Psoas muscle (tissue), 8 donors: ENCODE measurements at regions of chr13 and their contacts with region 1.

Region 1: DNA sequence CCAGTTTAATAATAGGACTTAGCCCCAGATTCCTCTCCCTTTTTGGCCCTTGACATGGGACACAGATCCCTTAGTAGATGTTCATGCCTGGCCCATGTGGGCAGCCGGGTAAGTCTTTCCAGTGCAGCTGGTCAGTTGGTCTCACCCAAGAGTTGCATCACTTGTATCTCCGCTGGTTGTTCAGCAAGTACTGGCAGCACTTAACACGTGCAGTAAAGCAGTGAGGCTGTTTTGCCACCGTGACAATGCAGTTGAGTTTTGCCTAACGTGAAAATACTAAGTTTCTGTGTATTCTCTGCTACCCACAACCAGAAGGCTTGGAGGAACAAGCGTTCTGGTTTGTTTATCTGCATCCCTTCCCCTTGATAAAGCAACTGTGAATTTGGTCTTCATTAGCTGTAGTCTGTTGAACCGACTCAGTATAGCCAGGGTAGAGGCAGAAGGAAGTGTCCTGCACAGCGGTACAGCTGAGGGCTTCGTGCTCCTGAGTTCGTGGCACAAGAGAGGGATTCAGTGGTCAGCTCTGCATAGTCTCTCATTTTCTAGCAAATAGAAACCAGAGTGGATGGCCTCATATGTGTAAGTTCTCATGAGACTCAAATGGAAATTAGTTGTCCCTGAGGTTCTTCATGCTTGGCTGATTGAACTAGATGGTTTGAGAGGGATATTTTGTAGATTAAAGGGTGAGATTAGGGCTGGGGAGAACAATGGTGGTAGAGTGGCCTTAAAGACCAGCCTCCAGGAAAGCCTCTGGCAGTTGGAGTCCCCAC is 50.3 kb downstream of the ARHGEF7 start:
- DNase-seq: peak; percentile 66 to 89
- ATAC-seq: peak; percentile 95 to 98 (median 96)
- H3K4me3 ChIP-seq: no peak overlapping the region
- H3K27ac ChIP-seq: peak overlapping the region; percentile 86
- H3K4me1 ChIP-seq: peaks cover 68% of the 10 kb centered on the region
- H3K27me3 ChIP-seq: no peaks in the 10 kb centered on the region
- CTCF ChIP-seq: no peak

Region 2: DNA sequence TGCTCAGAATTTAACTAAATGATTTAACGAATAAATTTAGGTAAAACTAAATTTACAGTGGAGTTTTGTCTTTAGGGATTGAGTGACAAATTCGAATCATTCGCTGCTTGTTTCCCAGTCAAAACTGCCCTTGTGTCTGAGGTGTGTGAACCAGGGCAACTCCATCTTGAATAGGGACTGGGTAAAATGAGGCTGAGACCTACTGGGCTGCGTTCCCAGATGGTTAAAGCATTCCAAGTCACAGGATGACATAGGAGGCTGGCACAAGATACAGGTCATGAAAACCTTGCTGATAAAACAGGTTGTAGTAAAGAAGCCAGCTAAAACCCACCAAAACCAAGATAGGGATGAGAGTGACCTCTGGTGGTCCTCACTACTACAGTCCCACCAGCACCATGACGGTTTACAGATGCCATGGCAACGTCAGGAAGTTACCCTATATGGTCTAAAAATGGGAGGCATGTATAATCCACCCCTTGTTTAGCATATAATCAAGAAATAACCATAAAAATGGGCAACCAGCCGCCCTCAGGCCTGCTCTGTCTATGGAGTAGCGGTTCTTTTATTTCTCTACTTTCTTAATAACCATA is 240.3 kb before region 1 on chr13:
- intact Hi-C with region 1: no loop called
- DNase-seq: no peak
- ATAC-seq: peak in 3 of 4 donors; percentile 6 to 41 (median 21)
- H3K4me3 ChIP-seq: no peak overlapping the region
- H3K27ac ChIP-seq: peak overlapping the region; percentile 91
- H3K4me1 ChIP-seq: peaks cover 46% of the 10 kb centered on the region
- H3K27me3 ChIP-seq: no peaks in the 10 kb centered on the region
- CTCF ChIP-seq: peak; percentile 32

Region 3: GRCh38 chr13:111210544-111211469 is 45.4 kb after region 1 on chr13:
- intact Hi-C with region 1: loop called in 1 of 2 experiments (anchors 5 kb)
- DNase-seq: peak in 1 of 2 donors; percentile 70
- ATAC-seq: peak; percentile 60 to 71 (median 64)
- H3K4me3 ChIP-seq: peak overlapping the region; percentile 17
- H3K27ac ChIP-seq: peak overlapping the region; percentile 36
- H3K4me1 ChIP-seq: peaks cover 80% of the 10 kb centered on the region
- H3K27me3 ChIP-seq: no peaks in the 10 kb centered on the region
- CTCF ChIP-seq: no peak

Region 4: GRCh38 chr13:111247562-111247961 is 82.1 kb after region 1 on chr13:
- intact Hi-C with region 1: no loop called
- DNase-seq: peak in 1 of 2 donors; percentile 75
- ATAC-seq: peak; percentile 83 to 91 (median 90)
- H3K4me3 ChIP-seq: no peak overlapping the region
- H3K27ac ChIP-seq: peak overlapping the region; percentile 75
- H3K4me1 ChIP-seq: peaks cover 60% of the 10 kb centered on the region
- H3K27me3 ChIP-seq: no peaks in the 10 kb centered on the region
- CTCF ChIP-seq: no peak

Region 5: DNA sequence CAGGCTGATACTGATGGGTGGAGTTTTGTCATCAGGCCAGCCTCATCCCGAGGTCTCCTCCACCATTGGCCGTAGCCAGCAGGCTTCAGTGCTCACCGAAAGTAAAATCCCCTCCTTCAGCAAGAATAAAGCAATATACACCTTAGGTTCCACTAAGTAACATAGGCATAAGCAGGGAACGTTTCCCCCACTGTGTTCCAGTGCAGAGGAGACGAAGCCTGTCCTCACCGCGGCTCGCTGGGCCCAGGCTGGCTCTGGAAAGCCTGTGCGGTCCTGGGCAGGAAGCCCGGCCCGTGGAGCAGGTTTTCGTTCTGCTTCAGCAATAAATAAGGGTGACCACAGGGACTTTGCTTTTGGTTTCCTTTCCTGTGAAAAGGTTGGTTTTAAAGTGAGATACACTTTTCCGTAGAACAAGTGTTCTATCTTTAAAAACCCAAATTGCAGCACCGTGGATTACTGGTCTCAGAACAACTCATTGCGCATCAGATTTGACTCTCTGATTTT is 138.7 kb after region 1 on chr13:
- intact Hi-C with region 1: no loop called
- DNase-seq: no peak
- ATAC-seq: no peak
- H3K4me3 ChIP-seq: no peak overlapping the region
- H3K27ac ChIP-seq: no peak overlapping the region
- H3K4me1 ChIP-seq: no peaks in the 10 kb centered on the region
- H3K27me3 ChIP-seq: no peaks in the 10 kb centered on the region
- CTCF ChIP-seq: no peak